Activated CD4-positive, alpha-beta T cell treated with anti-CD3 and anti-CD28 coated beads, Interleukin-2, amount 10 ng/mL, durations not matched to agents 24 days and 14 days (primary cell): ENCODE measurements at regions of chr3 and their contacts with region 1.

Region 1: DNA sequence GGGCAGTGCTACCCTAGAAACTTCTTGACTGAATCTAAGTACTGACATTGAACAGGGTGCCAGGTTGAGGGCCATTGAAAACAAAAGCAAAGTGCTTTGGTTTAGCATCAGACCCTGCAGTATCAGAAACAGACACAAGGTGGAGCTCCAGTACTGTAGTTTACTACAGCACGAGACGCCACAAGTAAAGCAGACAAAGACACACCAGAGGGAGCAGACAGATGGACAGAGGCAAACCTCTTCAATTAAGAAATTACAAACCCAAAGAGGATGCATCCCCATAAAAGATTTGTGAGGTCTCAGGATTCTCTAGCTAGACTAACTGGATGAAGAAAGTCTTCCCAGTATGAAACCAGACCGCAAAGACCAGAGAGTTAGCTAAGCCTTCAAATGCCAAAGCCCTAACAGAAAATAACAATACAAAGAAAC is 16.6 kb downstream of the TOP2B start:
- DNase-seq: peak; percentile 95
- H3K4me3 Mint-ChIP-seq: no peak overlapping the region
- H3K27ac Mint-ChIP-seq: peak overlapping the region; percentile 53
- H3K4me1 Mint-ChIP-seq: peaks cover 34% of the 10 kb centered on the region
- H3K27me3 Mint-ChIP-seq: no peaks in the 10 kb centered on the region

Region 2: DNA sequence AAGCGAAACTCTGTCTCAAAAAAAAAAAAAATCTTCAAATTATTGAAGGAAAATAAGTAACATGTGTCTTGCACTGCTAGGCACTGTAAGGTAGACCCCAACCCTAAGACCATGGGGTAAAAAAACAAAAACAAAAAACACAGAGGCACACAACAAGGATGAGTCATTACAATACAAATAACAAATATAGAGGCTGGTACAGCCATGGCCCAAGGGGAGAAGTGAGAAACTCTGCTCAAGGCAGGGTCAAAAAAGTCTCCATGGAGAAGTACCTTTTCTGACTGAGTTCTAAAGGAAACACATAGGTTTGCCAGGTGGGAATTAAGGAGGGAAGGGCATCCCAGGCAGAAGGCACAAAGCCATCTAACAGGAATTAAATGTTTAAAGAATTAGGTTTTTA is 38.0 kb before region 1 on chr3:
- intact Hi-C with region 1: no loop called
- DNase-seq: no peak
- H3K4me3 Mint-ChIP-seq: no peak overlapping the region
- H3K27ac Mint-ChIP-seq: peak overlapping the region; percentile 59
- H3K4me1 Mint-ChIP-seq: peaks cover 7% of the 10 kb centered on the region
- H3K27me3 Mint-ChIP-seq: no peaks in the 10 kb centered on the region

Region 3: GRCh38 chr3:25689219-25689618 is 41.1 kb after region 1 on chr3:
- intact Hi-C with region 1: no loop called
- DNase-seq: no peak
- H3K4me3 Mint-ChIP-seq: no peak overlapping the region
- H3K27ac Mint-ChIP-seq: no peak overlapping the region
- H3K4me1 Mint-ChIP-seq: no peaks in the 10 kb centered on the region
- H3K27me3 Mint-ChIP-seq: peaks cover 17% of the 10 kb centered on the region

Region 4: GRCh38 chr3:25856902-25857518 is 208.9 kb after region 1 on chr3:
- intact Hi-C with region 1: loop called (anchors 1 kb)
- DNase-seq: peak; percentile 73
- H3K4me3 Mint-ChIP-seq: no peak overlapping the region
- H3K27ac Mint-ChIP-seq: no peak overlapping the region
- H3K4me1 Mint-ChIP-seq: peaks cover 2% of the 10 kb centered on the region
- H3K27me3 Mint-ChIP-seq: no peaks in the 10 kb centered on the region

Region 5: DNA sequence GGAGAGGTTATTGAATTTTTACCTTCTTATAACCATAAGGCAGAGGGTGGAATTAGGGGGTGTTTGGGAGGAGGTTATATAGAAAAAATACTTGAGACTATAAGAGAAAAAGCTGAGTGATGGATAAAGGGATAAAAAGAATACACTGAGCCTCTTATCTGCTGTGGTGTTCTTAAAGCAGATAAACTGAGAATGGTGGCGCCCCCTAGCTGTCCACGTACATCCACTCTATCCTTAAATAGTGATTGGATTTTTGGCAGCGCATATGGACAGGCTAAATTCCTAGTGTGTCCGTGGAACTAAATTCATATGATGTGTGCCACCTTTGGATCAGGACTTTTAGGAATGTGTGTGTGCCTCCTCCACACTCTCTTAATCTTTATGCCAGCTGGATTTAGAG is 262.9 kb after region 1 on chr3:
- intact Hi-C with region 1: loop called (anchors 1 kb)
- DNase-seq: peak; percentile 78
- H3K4me3 Mint-ChIP-seq: no peak overlapping the region
- H3K27ac Mint-ChIP-seq: no peak overlapping the region
- H3K4me1 Mint-ChIP-seq: peaks cover 3% of the 10 kb centered on the region
- H3K27me3 Mint-ChIP-seq: peaks cover 12% of the 10 kb centered on the region

Region 6: DNA sequence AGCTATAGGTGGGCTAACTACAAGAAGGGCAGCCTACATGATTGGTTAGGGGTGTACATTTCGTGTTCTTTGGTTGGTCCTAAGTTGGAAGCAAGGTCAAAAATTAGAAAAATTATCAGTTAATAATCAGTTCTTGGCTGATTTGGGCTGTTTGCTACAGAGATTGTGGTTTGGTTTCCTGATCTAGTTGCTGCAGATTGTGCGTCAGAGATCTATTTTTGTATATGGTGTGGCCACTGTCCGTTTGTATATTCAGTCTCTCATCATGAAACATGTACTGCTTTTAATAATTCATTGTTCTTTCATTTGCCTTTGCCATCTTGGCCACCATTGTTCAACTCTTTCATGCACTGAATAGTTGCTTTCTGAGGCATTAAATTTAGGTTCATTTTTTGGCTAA is 1055.4 kb after region 1 on chr3:
- intact Hi-C with region 1: loop called (anchors 10 kb)
- DNase-seq: no peak
- H3K4me3 Mint-ChIP-seq: no peak overlapping the region
- H3K27ac Mint-ChIP-seq: no peak overlapping the region
- H3K4me1 Mint-ChIP-seq: no peaks in the 10 kb centered on the region
- H3K27me3 Mint-ChIP-seq: no peaks in the 10 kb centered on the region